ENCODE measurements at regions of chr15 and their contacts with region 1.

Region 1: DNA sequence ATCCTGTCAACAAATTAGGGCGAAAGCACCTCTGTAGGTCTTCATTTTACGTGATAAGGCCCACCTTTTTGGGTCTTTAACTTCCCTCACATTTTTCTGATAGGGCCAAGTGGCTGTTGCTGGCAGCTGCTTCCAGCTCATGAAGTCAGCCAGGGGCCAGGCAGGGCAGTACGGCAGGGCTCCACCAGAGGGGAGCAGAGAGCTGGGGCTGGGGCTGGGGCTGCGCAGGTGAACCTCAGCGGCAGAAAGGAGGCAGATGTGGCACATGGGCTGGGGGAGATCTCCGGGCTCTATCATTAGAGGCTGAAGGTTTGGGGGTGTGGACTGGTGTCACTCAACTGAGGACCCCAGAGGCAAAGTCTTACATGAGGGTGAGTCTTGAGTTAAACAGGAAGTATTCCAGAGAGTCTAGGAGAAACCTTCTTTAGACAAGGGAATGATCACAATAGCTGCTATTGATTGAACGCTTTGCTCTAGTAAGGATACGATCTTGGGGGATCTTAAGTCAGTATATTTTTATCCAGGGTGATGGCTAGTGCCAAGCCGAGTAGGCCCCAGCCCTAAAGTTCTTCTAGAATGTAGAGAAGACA is 62.8 kb upstream of the MEX3B start:
- DNase-seq: peak; percentile 92
- ATAC-seq: peak; percentile 89
- H3K4me3 Mint-ChIP-seq: no peak overlapping the region
- H3K27ac Mint-ChIP-seq: no peak overlapping the region
- H3K4me1 Mint-ChIP-seq: peaks cover 3% of the 10 kb centered on the region; the same call in 1 of the 2 replicates
- H3K27me3 Mint-ChIP-seq: peaks cover 11% of the 10 kb centered on the region
- CTCF ChIP-seq: peak; percentile 91

Region 2: GRCh38 chr15:82064824-82065223 is 43.8 kb before region 1 on chr15:
- CTCF ChIA-PET with region 1: interaction called, 17 read pairs
- POLR2A ChIA-PET with region 1: no interaction called
- DNase-seq: no peak
- ATAC-seq: no peak
- H3K4me3 Mint-ChIP-seq: no peak overlapping the region
- H3K27ac Mint-ChIP-seq: no peak overlapping the region
- H3K4me1 Mint-ChIP-seq: peaks cover 40% of the 10 kb centered on the region
- H3K27me3 Mint-ChIP-seq: peaks cover 68% of the 10 kb centered on the region
- CTCF ChIP-seq: no peak

Region 3: GRCh38 chr15:82081914-82082762 is 26.4 kb before region 1 on chr15:
- CTCF ChIA-PET with region 1: interaction called, 16 read pairs
- POLR2A ChIA-PET with region 1: no interaction called
- DNase-seq: peak; percentile 54
- ATAC-seq: peak; percentile 94
- H3K4me3 Mint-ChIP-seq: no peak overlapping the region
- H3K27ac Mint-ChIP-seq: no peak overlapping the region
- H3K4me1 Mint-ChIP-seq: peaks cover 7% of the 10 kb centered on the region; the same call in 1 of the 2 replicates
- H3K27me3 Mint-ChIP-seq: no peaks in the 10 kb centered on the region; the same call in 1 of the 2 replicates
- CTCF ChIP-seq: peak; percentile 49

Region 4: DNA sequence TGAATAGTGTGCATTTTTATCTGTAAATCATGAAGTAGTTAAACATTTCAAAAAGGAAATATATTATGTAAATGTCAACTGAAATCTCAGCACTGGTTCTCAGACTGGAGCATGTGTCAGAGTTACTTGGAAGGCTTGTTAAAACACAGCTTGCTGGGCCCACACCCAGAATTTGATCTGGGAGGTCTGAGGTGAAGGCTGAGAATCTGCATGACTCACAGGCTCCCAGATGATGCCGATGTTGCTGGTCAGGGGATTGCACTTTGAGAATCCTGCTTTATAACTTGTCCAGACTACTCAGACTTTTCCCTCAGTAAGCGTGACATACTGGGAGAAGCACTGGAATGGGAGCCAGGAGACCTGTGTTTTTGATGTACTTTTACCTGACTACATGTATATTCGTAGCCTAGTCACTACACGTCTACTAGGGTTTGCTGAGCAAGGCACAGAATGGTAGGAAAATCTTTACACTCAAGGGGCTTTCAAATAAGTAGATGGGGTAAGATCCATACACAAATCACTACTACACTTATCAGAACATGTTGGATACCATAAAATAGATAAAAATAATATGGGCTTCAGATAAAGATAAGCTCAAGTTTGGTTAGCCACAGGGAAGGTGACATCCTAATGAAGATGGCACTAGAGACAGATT is 14.3 kb after region 1 on chr15:
- CTCF ChIA-PET with region 1: interaction called, 23 read pairs
- POLR2A ChIA-PET with region 1: no interaction called
- DNase-seq: no peak
- ATAC-seq: no peak
- H3K4me3 Mint-ChIP-seq: no peak overlapping the region
- H3K27ac Mint-ChIP-seq: no peak overlapping the region
- H3K4me1 Mint-ChIP-seq: no peaks in the 10 kb centered on the region
- H3K27me3 Mint-ChIP-seq: no peaks in the 10 kb centered on the region
- CTCF ChIP-seq: no peak

Region 5: GRCh38 chr15:82139823-82140268 is 31.3 kb after region 1 on chr15:
- CTCF ChIA-PET with region 1: interaction called, 25 read pairs
- POLR2A ChIA-PET with region 1: no interaction called
- DNase-seq: no peak
- ATAC-seq: no peak
- H3K4me3 Mint-ChIP-seq: no peak overlapping the region
- H3K27ac Mint-ChIP-seq: no peak overlapping the region
- H3K4me1 Mint-ChIP-seq: no peaks in the 10 kb centered on the region
- H3K27me3 Mint-ChIP-seq: no peaks in the 10 kb centered on the region
- CTCF ChIP-seq: peak; percentile 51

Region 6: GRCh38 chr15:82262422-82263026 is 153.9 kb after region 1 on chr15 and contains the starts of genes EFL1 and SAXO2:
- CTCF ChIA-PET with region 1: interaction called, 10 read pairs
- POLR2A ChIA-PET with region 1: no interaction called
- DNase-seq: peak; percentile 92
- ATAC-seq: peak; percentile 91
- H3K4me3 Mint-ChIP-seq: peak within 1 kb of the TSS; percentile 88
- H3K27ac Mint-ChIP-seq: peak within 1 kb of the TSS; percentile 55; the same call in 1 of the 2 replicates
- H3K4me1 Mint-ChIP-seq: peaks cover 38% of the 10 kb centered on the region
- H3K27me3 Mint-ChIP-seq: no peaks in the 10 kb centered on the region
- CTCF ChIP-seq: no peak
- total RNA-seq, gene EFL1: 25.4 to 27.5 TPM (median 25.4 TPM) in 3 replicates
- total RNA-seq, gene SAXO2: 1.9 to 3.8 TPM (median 2.7 TPM) in 3 replicates